Heart left ventricle (tissue), 16 donors: ENCODE measurements at regions of chr2 and their contacts with region 1.

Region 1: DNA sequence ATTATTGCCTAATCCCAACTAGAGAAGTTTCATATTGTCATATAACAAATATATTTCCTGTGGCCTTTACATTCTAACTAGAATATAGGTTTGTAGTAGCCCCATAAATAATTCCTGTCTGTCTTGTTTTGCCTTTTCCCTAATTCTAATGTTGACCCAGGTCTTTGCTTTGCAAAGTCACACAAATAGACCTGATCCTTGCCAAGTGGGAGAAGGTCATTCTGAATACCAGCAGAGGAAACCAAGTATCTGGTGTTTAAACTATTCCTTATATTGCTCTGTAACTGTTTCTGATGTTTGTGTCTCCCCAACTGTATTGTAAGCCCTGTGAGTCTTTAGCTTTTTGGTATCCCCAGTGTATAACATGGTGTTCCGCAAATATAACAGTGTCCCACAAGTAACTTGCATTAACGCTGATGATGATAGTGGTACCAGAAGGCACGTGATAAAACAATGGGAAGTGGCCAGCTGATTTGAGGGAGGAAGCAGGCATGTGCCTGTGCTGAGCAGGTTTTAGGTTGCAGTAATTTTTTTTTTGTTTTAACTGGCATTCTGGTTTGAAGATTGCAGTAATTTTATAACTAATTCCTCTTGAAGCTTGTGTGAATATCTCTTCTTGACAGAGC is 11.1 kb downstream of the HADHB start:
- DNase-seq: peak in 1 of 5 donors; percentile 28
- ATAC-seq: peak; percentile 68 to 73 (median 72)
- H3K4me3 ChIP-seq: no peak overlapping the region
- H3K27ac ChIP-seq: peak overlapping the region; percentile 0 to 84 (median 62)
- H3K4me1 ChIP-seq: peaks cover 0 to 76% (median 39%) of the 10 kb centered on the region in 12 donors
- H3K27me3 ChIP-seq: no peaks in the 10 kb centered on the region
- CTCF ChIP-seq: no peak
- POLR2A ChIP-seq: no peak

Region 2: DNA sequence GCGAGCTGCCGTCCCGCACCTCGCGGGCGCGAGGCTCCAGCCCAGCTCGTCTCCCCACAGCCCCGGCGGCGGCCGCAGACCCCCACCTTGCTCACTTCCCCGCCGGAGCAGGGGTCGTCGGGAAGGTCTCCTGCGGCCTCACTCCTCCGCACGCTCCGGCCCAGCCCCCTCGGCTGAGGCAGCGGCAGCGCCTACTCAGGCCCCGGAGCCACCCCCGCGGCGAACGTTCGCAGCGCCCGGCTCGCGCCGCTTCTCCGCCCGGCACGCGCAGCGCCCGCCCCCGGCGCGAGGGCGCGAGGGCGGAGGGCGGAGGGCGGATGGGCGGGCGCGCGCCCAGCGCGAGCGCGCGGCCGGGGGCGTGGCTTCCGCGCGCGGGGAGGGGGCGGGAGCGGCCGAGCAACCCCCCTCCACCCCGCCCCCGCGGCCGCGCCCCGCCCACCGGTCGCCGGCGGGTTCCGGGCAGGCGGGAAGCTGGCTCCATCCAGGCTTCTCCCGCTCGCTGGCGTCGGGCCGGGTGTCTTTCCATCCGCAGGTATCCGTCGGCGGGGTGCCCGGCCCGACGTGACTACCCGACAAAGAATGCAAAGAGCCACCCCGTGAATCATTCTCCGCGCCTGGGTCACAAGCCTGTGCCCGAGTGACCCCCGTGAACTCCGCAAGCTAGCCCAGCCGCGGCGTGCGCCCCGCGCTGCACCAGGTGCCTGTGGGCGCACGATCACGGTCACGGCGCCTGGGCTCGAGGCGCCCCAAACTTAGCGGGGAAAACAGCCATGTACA is 582.4 kb before region 1 on chr2 and contains the start of gene DTNB:
- intact Hi-C with region 1: no loop called
- DNase-seq: peak; percentile 81 to 91 (median 86)
- ATAC-seq: peak; percentile 37 to 92 (median 88)
- H3K4me3 ChIP-seq: peak within 1 kb of the TSS; percentile 65 to 99 (median 90)
- H3K27ac ChIP-seq: peak within 1 kb of the TSS; percentile 54 to 92 (median 83)
- H3K4me1 ChIP-seq: peaks cover 0 to 21% (median 11%) of the 10 kb centered on the region in 12 donors
- H3K27me3 ChIP-seq: no peaks in the 10 kb centered on the region
- CTCF ChIP-seq: no peak
- POLR2A ChIP-seq: peak in 1 of 2 donors; percentile 42
- total RNA-seq, gene DTNB: 2.5 to 17.3 (median 6.3) TPM

Region 3: GRCh38 chr2:26274058-26274613 is 18.3 kb after region 1 on chr2:
- intact Hi-C with region 1: loop called in 1 of 10 experiments (anchors 2 kb)
- DNase-seq: peak in 4 of 5 donors; percentile 29 to 57 (median 38)
- ATAC-seq: peak; percentile 91 to 94 (median 92)
- H3K4me3 ChIP-seq: no peak overlapping the region
- H3K27ac ChIP-seq: peak overlapping the region; percentile 55 to 90 (median 77)
- H3K4me1 ChIP-seq: peaks cover 0 to 59% (median 26%) of the 10 kb centered on the region in 12 donors
- H3K27me3 ChIP-seq: no peaks in the 10 kb centered on the region
- CTCF ChIP-seq: no peak
- POLR2A ChIP-seq: no peak